B cell (primary cell): ENCODE measurements at regions of chr9 and their contacts with region 1.

Region 1: GRCh38 chr9:81656004-81656403 is 33.3 kb downstream of the TLE1 start:
- DNase-seq: peak; percentile 89
- ATAC-seq: peak; percentile 86
- H3K4me3 ChIP-seq: peak overlapping the region in 4 of 5 experiments; percentile 31 to 67 (median 38)
- H3K4me3 Mint-ChIP-seq: peak overlapping the region; percentile 85
- H3K27ac ChIP-seq: peak overlapping the region; percentile 89 to 91
- H3K27ac Mint-ChIP-seq: peak overlapping the region; percentile 95
- H3K4me1 ChIP-seq: peaks cover 70 to 86% of the 10 kb centered on the region in 2 donors
- H3K4me1 Mint-ChIP-seq: peaks cover 80% of the 10 kb centered on the region
- H3K27me3 ChIP-seq: no peaks in the 10 kb centered on the region
- H3K27me3 Mint-ChIP-seq: no peaks in the 10 kb centered on the region
- CTCF ChIP-seq: no peak

Region 2: DNA sequence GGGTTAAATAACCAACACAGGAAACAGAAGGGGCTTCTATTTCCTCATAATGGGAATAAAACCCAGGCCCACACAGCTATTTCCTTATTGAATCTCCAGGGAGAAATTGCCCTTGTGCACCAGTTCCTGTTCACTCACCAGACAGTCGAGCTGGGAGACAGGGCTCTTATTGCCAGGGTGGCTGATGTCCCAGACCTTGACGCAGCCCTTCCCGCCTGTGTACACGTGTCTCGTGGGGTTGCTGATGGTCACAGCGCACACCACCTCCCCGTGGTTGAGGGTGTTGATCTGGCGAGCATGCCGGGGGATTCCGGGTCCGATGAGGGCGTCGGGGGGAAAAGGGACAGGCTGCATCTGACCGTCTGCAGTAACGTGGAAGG is 63.1 kb before region 1 on chr9:
- CTCF ChIA-PET with region 1: no interaction called
- POLR2A ChIA-PET with region 1: no interaction called
- intact Hi-C with region 1: loop called (anchors 10 kb)
- DNase-seq: peak; percentile 24
- ATAC-seq: peak; percentile 21
- H3K4me3 ChIP-seq: no peak overlapping the region
- H3K4me3 Mint-ChIP-seq: peak overlapping the region; percentile 5
- H3K27ac ChIP-seq: no peak overlapping the region
- H3K27ac Mint-ChIP-seq: peak overlapping the region; percentile 11
- H3K4me1 ChIP-seq: peaks cover 42 to 44% of the 10 kb centered on the region in 2 donors
- H3K4me1 Mint-ChIP-seq: peaks cover 49% of the 10 kb centered on the region
- H3K27me3 ChIP-seq: no peaks in the 10 kb centered on the region
- H3K27me3 Mint-ChIP-seq: no peaks in the 10 kb centered on the region
- CTCF ChIP-seq: no peak

Region 3: DNA sequence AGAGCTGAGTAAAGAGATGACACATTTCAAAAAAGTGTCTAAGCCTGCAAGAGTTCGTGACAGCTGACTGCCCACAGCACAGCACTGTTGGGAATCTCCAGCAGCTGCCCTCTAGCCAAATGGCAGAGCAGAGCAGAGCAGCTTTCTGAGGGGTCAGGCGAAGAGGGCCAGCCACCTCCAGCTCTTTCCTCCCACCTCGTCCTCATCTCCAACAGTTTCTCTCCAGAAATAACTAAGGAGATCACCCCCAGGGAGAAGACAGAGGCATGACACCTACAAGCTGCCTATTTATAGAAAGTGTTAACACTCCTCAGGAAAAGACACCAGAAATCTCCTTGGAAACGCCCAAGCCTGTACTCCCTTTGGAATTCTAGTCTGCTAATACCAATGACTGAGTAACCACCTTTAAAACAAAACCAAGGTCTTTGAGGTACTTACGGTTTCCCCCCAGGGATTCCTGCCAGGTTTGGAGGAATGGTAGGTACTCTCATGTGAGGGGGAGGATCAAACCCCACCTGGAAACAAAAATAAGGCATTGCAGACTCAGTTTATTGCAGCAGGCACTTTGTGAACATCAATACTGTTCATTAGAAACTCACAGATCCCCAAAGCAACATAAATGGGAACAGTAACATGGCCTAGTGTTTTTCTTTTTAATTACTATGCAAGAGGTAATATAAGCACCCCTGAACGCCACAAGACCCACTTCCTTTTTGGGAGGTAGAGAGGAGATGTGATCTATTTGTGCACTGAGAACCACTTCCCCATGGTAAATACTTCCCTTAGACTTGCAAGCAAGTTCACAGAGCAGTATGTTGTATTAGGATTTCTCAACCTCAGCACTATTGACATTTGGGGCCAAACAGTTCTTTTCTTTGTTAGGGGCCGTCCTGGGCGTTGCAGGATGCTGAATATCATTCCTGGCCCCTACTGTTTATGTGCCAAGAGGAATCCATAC is 45.9 kb before region 1 on chr9:
- CTCF ChIA-PET with region 1: no interaction called
- POLR2A ChIA-PET with region 1: no interaction called
- intact Hi-C with region 1: loop called (anchors 5 kb)
- DNase-seq: peak; percentile 60
- ATAC-seq: peak; percentile 66
- H3K4me3 ChIP-seq: peak overlapping the region in 1 of 5 experiments; percentile 23
- H3K4me3 Mint-ChIP-seq: peak overlapping the region; percentile 51
- H3K27ac ChIP-seq: peak overlapping the region; percentile 7 to 36
- H3K27ac Mint-ChIP-seq: peak overlapping the region; percentile 13
- H3K4me1 ChIP-seq: peaks cover 19 to 24% of the 10 kb centered on the region in 2 donors
- H3K4me1 Mint-ChIP-seq: peaks cover 27% of the 10 kb centered on the region
- H3K27me3 ChIP-seq: no peaks in the 10 kb centered on the region
- H3K27me3 Mint-ChIP-seq: no peaks in the 10 kb centered on the region
- CTCF ChIP-seq: no peak

Region 4: DNA sequence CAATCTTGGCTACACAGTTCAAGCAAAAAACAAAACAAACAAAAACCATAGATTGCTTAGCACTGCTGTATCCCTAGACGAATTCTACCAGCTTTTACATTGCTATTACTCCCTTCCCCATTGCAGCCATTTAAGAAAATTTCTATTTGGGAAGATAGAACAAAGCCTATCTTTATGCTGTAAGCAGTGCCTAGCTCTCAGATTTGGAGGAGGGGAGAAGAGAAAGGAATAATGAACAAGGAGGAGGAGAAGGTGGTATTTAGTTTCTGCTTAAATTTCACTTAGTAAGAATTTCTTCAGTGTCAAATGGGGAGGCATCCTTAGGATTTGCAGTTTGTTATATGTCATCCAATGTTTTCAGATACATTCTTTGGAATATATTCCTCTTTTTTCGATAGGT is 49.6 kb after region 1 on chr9:
- CTCF ChIA-PET with region 1: no interaction called
- POLR2A ChIA-PET with region 1: no interaction called
- intact Hi-C with region 1: no loop called
- DNase-seq: no peak
- ATAC-seq: no peak
- H3K4me3 ChIP-seq: no peak overlapping the region
- H3K4me3 Mint-ChIP-seq: no peak overlapping the region
- H3K27ac ChIP-seq: no peak overlapping the region
- H3K27ac Mint-ChIP-seq: no peak overlapping the region
- H3K4me1 ChIP-seq: no peaks in the 10 kb centered on the region
- H3K4me1 Mint-ChIP-seq: no peaks in the 10 kb centered on the region
- H3K27me3 ChIP-seq: no peaks in the 10 kb centered on the region
- H3K27me3 Mint-ChIP-seq: no peaks in the 10 kb centered on the region
- CTCF ChIP-seq: no peak

Region 5: GRCh38 chr9:81716409-81716808 is 60.4 kb after region 1 on chr9:
- CTCF ChIA-PET with region 1: no interaction called
- POLR2A ChIA-PET with region 1: no interaction called
- intact Hi-C with region 1: no loop called
- DNase-seq: no peak
- ATAC-seq: no peak
- H3K4me3 ChIP-seq: no peak overlapping the region
- H3K4me3 Mint-ChIP-seq: no peak overlapping the region
- H3K27ac ChIP-seq: no peak overlapping the region
- H3K27ac Mint-ChIP-seq: no peak overlapping the region
- H3K4me1 ChIP-seq: no peaks in the 10 kb centered on the region
- H3K4me1 Mint-ChIP-seq: peaks cover 1% of the 10 kb centered on the region
- H3K27me3 ChIP-seq: no peaks in the 10 kb centered on the region
- H3K27me3 Mint-ChIP-seq: peaks cover 3% of the 10 kb centered on the region
- CTCF ChIP-seq: no peak

Region 6: DNA sequence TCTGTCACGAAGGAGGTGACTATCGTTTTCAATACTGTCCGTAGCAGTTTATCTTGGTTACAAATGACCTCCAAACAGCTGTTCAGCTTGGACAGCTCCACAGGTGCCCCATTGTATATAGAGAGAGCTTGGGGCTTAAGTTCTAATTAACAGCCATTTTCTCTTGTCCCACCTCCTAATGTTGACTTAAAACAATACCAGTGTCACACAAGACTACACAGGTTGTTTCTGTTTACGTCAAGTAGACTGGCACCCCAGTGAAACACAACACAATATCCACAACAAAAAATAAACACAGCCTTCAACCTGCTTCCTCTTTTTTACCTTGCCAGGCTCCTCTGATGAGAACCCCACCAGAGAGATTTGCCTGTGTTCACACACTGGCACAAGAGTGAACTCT is 73.1 kb after region 1 on chr9:
- CTCF ChIA-PET with region 1: interaction called, 3 read pairs
- POLR2A ChIA-PET with region 1: interaction called, 3 read pairs
- intact Hi-C with region 1: loop called (anchors 1 kb)
- DNase-seq: peak; percentile 76
- ATAC-seq: peak; percentile 73
- H3K4me3 ChIP-seq: peak overlapping the region; percentile 15 to 54 (median 42)
- H3K4me3 Mint-ChIP-seq: peak overlapping the region; percentile 78
- H3K27ac ChIP-seq: peak overlapping the region; percentile 60 to 69
- H3K27ac Mint-ChIP-seq: peak overlapping the region; percentile 85
- H3K4me1 ChIP-seq: peaks cover 22 to 24% of the 10 kb centered on the region in 2 donors
- H3K4me1 Mint-ChIP-seq: peaks cover 22% of the 10 kb centered on the region
- H3K27me3 ChIP-seq: no peaks in the 10 kb centered on the region
- H3K27me3 Mint-ChIP-seq: no peaks in the 10 kb centered on the region
- CTCF ChIP-seq: no peak